Left cardiac atrium (tissue), 4 donors: ENCODE measurements at regions of chr4 and their contacts with region 1.

Region 1: GRCh38 chr4:20251796-20252655 is at the start of gene SLIT2:
- DNase-seq: peak; percentile 86
- ATAC-seq: peak; percentile 91
- total RNA-seq, gene SLIT2: 11.2 to 14.9 TPM

Region 2: DNA sequence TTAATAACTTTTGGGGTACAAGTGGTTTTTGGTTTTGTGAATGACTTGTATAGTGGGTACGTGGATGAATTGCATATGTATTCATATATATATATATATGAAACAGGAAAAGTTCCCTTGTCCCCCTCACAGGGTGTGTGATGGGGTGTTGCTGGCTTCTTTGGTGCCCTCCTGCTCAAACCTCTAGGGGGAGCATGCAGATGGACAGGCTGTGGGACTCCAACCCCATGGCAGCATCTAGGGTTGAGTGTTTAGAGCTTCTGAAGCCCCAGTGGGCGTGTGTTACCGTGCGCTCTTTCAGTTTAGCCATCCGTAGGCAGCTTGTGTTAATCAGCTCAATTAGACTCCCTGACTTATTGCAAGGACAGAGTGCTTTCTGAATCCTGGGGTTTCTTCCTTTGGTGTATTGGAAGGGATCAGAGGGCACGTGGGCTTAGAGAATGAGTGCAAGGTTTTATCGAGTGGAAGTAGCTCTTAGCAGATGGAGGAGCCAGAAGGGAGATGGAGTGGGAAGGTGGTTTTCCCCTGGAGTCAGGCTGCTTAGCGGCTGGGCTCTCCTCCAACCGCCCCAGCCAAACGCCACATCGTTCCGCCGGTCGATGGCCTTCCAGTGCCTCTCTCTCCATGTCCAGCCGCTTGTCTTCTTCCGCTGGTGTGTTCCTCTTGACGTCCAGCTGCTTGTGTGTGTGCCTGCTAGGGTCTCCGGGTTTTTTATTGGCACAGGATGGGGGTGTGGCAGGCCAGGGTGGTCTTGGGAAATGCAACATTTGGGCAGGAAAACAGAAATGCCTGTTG is 1556.1 kb before region 1 on chr4:
- intact Hi-C with region 1: loop called in 1 of 2 experiments (anchors 5 kb)
- DNase-seq: no peak
- ATAC-seq: no peak

Region 3: DNA sequence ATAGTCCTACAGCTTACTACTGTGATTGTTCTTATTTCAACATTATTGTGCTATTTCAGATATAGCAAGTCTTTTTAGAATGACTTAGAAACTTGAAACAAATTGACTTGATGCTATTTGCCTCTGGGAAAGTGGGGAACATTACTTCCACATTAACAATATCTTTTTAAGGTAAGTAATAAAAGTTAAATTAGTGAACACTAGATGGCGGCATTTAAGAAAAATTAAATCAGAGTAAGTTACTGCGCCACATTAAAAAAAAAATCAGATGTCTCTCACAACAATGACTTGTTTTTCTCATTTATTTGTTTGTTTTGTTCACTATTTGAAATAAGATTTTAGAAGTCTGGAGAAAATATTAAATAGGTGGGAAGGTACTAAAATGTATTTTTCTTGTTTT is 1027.2 kb before region 1 on chr4:
- intact Hi-C with region 1: loop called (anchors 5 to 10 kb)
- DNase-seq: no peak
- ATAC-seq: no peak

Region 4: DNA sequence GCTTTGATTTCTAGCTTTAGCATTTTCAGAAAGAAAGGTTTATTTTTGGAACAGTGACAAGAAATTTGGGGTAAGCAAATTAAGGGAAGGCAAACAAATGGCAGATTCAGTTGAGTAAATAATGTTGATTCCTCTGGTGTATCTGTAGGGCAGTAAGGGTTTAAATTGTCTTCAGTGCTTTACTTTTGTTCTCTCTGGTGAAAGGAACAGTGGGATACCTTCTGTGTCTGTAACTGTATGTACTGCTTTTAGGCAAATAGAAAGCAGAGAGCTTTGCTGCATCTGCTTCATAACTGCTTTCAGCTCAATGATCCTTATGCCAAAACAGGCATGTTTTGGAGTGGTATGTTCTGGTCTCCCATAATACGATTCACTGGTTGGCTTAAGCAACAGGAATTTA is 932.4 kb before region 1 on chr4:
- intact Hi-C with region 1: loop called in 1 of 2 experiments (anchors 10 kb)
- DNase-seq: no peak
- ATAC-seq: no peak

Region 5: GRCh38 chr4:19809989-19810388 is 442.0 kb before region 1 on chr4:
- intact Hi-C with region 1: no loop called
- DNase-seq: no peak
- ATAC-seq: no peak

Region 6: DNA sequence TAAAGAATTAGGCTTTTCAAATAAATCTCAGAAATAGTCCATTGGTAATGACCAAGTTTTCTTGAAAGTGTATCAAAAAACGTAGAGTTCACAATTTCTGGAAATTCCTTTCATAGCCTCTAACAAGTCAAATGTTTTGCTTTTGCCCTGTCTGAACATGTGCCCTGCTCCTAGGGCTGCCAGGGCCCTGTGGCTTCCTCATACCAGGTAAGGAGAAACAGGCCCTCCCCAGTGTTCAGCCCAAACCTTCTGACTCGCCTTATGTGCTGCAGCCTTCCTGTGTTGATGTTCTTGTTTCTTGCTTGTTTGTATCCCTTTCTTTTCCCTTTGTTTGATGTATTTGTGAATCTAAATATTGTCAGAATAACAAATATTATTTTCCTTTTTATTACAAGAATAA is 302.1 kb after region 1 on chr4:
- intact Hi-C with region 1: no loop called
- DNase-seq: no peak
- ATAC-seq: no peak